GM18951 (cell line): ENCODE measurements at regions of chr20 and their contacts with region 1.

Region 1: DNA sequence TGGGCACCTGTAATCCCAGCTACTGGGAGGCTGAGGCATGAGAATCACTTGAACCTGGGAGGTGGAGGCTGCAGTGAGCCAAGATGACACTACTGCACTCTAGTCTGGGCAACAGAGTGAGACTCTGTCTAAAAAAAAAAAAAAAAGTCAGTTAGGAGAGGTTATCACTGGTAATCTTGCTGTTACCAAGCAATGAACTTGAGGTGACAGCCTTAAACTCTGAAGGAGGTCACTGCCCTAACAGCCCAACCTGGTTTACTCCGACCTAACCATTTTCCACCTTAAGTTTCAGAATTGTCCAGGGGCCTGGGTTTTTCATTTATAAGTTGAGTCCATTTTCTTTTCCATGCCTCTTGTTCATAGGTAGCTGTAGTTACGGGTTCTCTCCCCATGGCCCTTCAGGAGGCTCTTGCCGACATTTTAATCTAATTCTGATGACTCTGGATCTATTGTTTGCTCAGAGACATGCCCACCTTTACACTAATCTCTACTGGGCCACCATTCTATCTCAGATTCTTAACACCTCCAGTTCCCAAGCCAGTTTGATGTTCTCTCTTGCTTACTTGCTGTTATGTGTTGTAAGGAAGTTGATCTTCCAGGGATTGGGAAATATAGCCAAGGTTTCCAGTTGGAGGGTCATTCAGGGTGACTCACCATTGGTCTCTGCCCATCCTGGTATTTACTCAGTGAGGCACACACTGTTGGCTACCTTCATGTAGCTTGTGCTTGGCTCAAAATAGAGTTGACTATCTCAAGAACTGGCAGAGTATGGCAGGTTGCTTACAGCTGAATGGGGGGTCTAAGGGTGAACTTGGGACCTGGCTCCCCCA is 29.1 kb downstream of the SHLD1 start:
- POLR2A ChIP-seq: no peak

Region 2: DNA sequence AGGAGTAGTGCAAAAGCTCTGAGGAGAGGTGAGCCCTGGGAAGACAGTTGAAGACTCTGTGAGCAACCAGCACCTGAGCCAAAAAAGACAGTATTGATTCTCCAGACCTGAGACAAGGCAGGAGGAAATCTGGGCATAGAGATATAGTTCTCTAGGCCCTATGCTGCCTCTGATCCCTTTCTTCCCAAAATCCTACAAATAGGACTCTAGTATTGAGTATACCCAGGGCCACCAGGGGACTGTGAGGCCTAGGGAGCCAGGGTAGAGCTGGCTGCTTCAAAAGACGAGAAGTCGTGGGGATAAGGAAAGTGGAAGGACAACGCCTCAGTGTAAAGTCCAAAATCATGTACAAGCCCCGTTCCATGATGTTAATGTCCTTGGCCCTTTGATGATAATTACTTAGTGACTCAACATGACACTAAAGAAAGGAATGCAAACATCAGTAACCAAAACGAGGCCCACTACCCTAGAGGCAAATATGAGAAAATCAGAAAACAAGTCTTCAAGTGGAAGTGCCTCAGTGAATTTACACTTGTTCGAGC is 265.2 kb before region 1 on chr20:
- in situ Hi-C with region 1: no loop called
- POLR2A ChIP-seq: no peak

Region 3: GRCh38 chr20:5570452-5570851 is 208.8 kb before region 1 on chr20:
- in situ Hi-C with region 1: loop called (anchors 10 kb)
- POLR2A ChIP-seq: no peak

Region 4: GRCh38 chr20:5696011-5696559 is 83.2 kb before region 1 on chr20:
- in situ Hi-C with region 1: no loop called
- POLR2A ChIP-seq: no peak

Region 5: GRCh38 chr20:5996765-5997164 is 217.5 kb after region 1 on chr20:
- in situ Hi-C with region 1: no loop called
- POLR2A ChIP-seq: no peak